H1 (cell line): ENCODE measurements at regions of chr11 and their contacts with region 1.

Region 1: DNA sequence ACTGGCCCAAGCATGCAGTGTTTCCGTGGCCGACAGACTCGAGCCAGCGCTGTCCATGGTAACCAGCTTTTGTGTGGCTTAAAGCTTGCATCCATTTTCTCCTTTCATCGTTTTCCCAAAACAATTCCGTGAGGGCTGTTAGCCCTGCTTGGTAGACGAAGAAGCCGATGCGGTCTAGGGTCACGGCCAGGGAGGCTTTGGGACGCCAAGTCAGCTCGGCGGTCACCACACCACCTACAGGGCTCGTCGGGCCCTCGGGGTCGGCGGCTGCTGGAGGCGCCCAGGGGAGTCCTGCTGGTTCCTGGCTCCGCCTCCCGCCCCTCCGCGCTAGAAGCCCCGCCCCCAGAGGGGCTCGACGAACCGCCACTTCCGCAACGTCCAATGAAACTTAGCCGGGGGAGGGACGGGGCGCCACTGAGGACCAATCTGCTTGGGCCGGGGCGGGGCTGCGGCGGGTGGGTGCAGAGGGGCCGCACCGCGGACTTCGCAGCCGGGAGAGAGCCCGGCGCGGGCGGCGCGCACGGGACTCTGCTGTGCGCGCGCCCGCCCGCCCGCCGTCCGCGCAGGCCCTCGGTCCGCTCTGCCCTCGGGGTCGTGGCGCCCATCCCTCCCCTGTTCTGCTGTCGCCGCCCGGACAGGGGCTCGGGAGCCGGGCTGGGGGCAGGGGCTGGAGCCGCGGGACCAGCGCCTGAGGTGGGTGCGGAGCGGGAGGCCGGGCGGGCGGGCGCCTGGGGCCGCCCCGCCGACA is at the start of gene TIGD3:
- DNase-seq: peak; percentile 85 to 98
- H3K4me3 ChIP-seq: peak within 1 kb of the TSS; percentile 65 to 90 (median 78)
- H3K27ac ChIP-seq: no peak within 1 kb of the TSS
- H3K4me1 ChIP-seq: peaks cover 0 to 10% (median 3%) of the 10 kb centered on the region in 4 experiments; a peak in 5 of 7 replicates
- H3K27me3 ChIP-seq: peaks cover 7 to 29% (median 19%) of the 10 kb centered on the region in 4 experiments
- CTCF ChIP-seq: no peak
- EP300 ChIP-seq: no peak
- POLR2A ChIP-seq: peak in 1 of 2 experiments; percentile 11; a peak in 1 of 3 replicates
- RAD21 ChIP-seq: no peak
- total RNA-seq, gene TIGD3: 0.88 and 1.3 TPM in 2 replicates

Region 2: DNA sequence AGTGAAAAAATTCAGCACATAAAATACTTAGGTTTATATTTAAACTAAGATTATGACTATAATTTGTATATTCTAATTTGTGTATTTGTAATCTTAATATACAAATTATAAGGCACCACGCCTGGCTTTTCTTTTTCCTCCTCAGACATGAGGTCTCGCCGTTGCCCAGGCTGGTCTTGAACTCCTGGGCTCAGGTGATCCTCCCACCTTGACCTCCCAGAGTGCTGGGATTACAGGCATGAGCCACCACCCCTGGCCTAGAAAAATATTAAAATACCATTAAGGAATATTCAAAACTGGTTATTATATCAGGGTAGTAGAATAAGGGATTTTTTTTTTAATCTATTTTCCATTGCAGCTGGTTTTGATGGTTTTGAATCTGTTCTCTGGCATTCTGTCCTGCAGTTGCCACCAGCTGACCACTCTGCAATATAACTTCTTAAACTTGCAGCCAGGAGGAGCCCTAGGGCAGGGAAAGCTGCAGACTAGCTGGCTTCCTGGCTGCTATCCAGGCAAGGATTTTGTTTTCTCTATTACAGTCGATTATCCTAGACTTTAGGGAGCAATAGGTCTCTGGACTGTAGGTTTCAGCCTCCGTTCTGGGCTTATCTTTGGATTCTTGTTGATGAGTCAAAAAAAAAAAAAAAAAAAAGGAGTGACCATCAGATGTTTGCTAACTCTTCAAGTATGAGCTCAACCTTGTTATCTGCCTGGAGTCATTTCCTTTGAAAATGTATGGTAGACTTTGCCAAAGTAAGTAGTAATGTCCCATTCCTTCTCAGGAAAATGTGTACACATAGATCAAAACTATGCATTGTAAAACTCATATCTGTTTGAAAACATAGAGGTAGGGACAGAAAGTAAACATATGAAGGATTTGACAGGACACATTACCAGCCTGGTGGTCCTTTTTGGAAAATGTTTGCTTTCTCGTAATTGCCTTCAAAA is 79.4 kb before region 1 on chr11:
- CTCF ChIA-PET with region 1: interaction called, 12 read pairs
- POLR2A ChIA-PET with region 1: interaction called, 4 read pairs
- DNase-seq: peak in 1 of 2 experiments; percentile 29
- H3K4me3 ChIP-seq: no peak overlapping the region
- H3K27ac ChIP-seq: no peak overlapping the region
- H3K4me1 ChIP-seq: no peaks in the 10 kb centered on the region; a peak in 1 of 7 replicates
- H3K27me3 ChIP-seq: no peaks in the 10 kb centered on the region
- CTCF ChIP-seq: peak; percentile 65 to 95 (median 81)
- EP300 ChIP-seq: no peak
- POLR2A ChIP-seq: no peak
- RAD21 ChIP-seq: peak; percentile 87 to 94

Region 3: DNA sequence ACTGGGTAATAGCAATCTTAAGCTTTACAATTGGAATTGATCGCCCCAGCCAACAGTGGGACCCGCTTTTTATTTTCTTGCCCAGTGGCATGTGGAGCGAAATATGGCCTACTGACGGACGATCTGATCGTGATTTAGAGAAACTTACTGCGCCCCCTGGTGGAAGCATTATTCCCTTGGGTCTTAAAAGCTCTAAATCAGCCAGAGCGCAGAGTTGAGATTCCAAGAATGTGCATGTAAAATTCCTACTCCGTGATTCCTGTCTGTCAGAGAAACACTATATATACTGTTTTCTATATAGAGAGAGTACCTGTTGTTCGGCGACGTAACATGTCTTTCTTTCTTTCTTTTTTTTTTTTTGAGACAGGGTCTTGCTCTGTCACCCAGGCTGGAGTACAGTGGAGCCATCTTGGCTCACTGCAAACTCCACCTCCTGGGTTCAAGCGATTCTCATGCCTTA is 24.5 kb before region 1 on chr11:
- CTCF ChIA-PET with region 1: interaction called, 27 read pairs
- POLR2A ChIA-PET with region 1: interaction called, 20 read pairs
- DNase-seq: peak in 1 of 2 experiments; percentile 91
- H3K4me3 ChIP-seq: no peak overlapping the region
- H3K27ac ChIP-seq: no peak overlapping the region
- H3K4me1 ChIP-seq: peaks cover 0 to 4% (median 2%) of the 10 kb centered on the region in 4 experiments; a peak in 3 of 7 replicates
- H3K27me3 ChIP-seq: no peaks in the 10 kb centered on the region; a peak in 1 of 7 replicates
- CTCF ChIP-seq: peak; percentile 29 to 79 (median 77)
- EP300 ChIP-seq: no peak
- POLR2A ChIP-seq: no peak
- RAD21 ChIP-seq: peak; percentile 49 to 60

Region 4: DNA sequence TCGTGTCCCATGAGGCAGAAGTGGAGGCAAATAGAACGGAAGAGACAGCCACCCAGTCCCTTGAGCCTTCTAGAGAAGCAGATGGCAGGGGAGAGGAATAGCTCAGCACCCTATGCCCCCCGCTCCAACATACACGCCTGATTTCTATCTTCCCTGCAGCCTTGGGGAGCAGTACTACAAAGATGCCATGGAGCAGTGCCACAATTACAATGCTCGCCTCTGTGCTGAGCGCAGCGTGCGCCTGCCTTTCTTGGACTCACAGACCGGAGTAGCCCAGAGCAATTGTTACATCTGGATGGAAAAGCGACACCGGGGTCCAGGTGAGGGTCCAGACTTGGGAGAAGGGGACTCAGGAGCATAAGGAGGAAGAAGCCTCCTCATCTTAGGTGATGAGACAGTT is 14.2 kb before region 1 on chr11:
- CTCF ChIA-PET with region 1: interaction called, 24 read pairs
- POLR2A ChIA-PET with region 1: interaction called, 10 read pairs
- DNase-seq: no peak
- H3K4me3 ChIP-seq: no peak overlapping the region
- H3K27ac ChIP-seq: no peak overlapping the region
- H3K4me1 ChIP-seq: no peaks in the 10 kb centered on the region
- H3K27me3 ChIP-seq: no peaks in the 10 kb centered on the region
- CTCF ChIP-seq: no peak
- EP300 ChIP-seq: no peak
- POLR2A ChIP-seq: no peak
- RAD21 ChIP-seq: no peak